PC-3 (cell line): ENCODE measurements at regions of chr7 and their contacts with region 1.

Region 1: DNA sequence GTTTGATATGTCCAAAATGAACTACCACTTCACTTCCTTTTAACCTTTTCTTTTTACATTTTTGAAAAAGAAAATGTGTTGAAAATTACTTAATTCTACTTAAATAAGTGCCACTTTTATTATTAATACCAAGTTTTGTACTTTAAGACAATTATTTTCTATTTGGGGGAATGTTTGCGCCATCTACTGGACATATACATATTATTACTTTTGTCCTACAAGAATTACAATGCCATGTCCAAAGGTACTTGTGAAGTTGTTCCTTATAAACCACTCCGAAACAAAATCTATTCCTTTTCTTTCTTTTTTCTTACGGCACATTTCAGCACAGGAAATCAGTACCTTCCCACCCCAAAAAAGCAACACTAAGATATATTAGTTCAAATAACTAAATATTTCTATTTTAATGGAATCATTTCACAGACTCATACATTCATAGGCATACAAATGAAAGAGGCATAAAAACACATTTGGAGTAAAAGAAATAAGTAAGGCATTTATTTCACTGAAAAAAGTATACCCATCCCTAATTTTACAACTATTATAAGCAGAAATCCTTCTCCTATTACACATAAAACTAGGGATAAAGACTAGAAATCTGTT is 169.9 kb downstream of the RNF133 start:
- DNase-seq: peak; percentile 50
- ATAC-seq: no peak; the same call in 1 of the 2 replicates
- H3K4me3 ChIP-seq: no peak overlapping the region
- H3K27ac ChIP-seq: no peak overlapping the region
- H3K4me1 ChIP-seq: no peaks in the 10 kb centered on the region
- H3K27me3 ChIP-seq: no peaks in the 10 kb centered on the region
- CTCF ChIP-seq: peak; percentile 71

Region 2: GRCh38 chr7:122014697-122015096 is 514.3 kb before region 1 on chr7:
- CTCF ChIA-PET with region 1: no interaction called
- POLR2A ChIA-PET with region 1: no interaction called
- intact Hi-C with region 1: loop called (anchors 5 kb)
- DNase-seq: peak; percentile 28
- ATAC-seq: no peak
- H3K4me3 ChIP-seq: no peak overlapping the region
- H3K27ac ChIP-seq: no peak overlapping the region
- H3K4me1 ChIP-seq: peaks cover 5% of the 10 kb centered on the region; the same call in 1 of the 2 replicates
- H3K27me3 ChIP-seq: peaks cover 4% of the 10 kb centered on the region; the same call in 1 of the 2 replicates
- CTCF ChIP-seq: peak; percentile 36; the same call in 1 of the 2 replicates

Region 3: DNA sequence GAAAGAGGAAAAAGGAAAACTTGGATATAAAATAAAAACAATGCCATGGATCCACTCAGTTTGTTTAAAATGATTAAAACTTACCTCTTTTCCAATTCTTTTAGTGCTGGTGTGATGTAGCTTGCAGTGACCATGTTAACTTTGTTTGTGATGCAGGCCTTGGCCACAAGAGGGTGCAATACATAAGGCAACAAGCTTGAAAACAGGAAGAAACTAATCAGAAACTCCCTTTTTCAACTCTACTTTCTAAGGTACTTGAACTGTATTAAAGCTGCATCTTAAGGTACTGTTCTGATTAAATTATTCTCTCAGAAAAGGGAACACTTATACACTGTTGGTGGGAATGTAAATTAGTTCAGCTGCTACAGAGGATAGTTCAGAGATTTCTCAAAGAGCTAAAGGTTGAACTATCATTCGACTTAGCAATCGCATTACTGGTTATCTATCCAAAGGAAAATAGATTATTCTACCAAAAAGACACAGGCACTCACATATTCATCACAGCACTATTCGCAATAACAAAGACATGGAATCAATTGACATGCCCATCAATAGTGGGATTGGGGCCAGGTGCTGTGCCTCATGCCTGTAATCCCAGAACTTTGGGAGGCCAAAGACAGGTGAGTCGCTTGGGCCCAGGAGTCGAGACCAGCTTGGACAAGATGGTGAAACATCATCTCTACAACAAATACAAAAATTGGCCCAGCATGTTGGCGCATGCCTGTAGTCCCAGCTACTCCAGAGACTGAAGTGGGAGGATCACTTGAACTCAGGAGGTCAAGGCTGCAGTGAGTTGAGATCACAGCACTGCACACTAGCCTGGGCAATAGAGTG is 435.8 kb before region 1 on chr7:
- CTCF ChIA-PET with region 1: interaction called, 3 read pairs
- POLR2A ChIA-PET with region 1: no interaction called
- intact Hi-C with region 1: loop called (anchors 2 kb)
- DNase-seq: peak; percentile 71
- ATAC-seq: peak; percentile 50
- H3K4me3 ChIP-seq: no peak overlapping the region
- H3K27ac ChIP-seq: no peak overlapping the region
- H3K4me1 ChIP-seq: no peaks in the 10 kb centered on the region
- H3K27me3 ChIP-seq: no peaks in the 10 kb centered on the region
- CTCF ChIP-seq: peak; percentile 83

Region 4: GRCh38 chr7:122219253-122219865 is 309.6 kb before region 1 on chr7:
- CTCF ChIA-PET with region 1: no interaction called
- POLR2A ChIA-PET with region 1: no interaction called
- intact Hi-C with region 1: loop called (anchors 1 kb)
- DNase-seq: peak; percentile 63
- ATAC-seq: peak; percentile 46
- H3K4me3 ChIP-seq: no peak overlapping the region
- H3K27ac ChIP-seq: no peak overlapping the region
- H3K4me1 ChIP-seq: peaks cover 11% of the 10 kb centered on the region; the same call in 1 of the 2 replicates
- H3K27me3 ChIP-seq: no peaks in the 10 kb centered on the region
- CTCF ChIP-seq: peak; percentile 70